ENCODE measurements at regions of chr5 and their contacts with region 1.

Region 1: GRCh38 chr5:73899055-73899454 is 273.1 kb downstream of the ARHGEF28 start:
- DNase-seq: no peak
- H3K4me3 ChIP-seq: no peak overlapping the region
- H3K27ac ChIP-seq: peak overlapping the region; percentile 39 to 79
- H3K4me1 ChIP-seq: peaks cover 0 to 7% of the 10 kb centered on the region in 2 donors
- H3K27me3 ChIP-seq: no peaks in the 10 kb centered on the region
- CTCF ChIP-seq: no peak
- POLR2A ChIP-seq: no peak

Region 2: DNA sequence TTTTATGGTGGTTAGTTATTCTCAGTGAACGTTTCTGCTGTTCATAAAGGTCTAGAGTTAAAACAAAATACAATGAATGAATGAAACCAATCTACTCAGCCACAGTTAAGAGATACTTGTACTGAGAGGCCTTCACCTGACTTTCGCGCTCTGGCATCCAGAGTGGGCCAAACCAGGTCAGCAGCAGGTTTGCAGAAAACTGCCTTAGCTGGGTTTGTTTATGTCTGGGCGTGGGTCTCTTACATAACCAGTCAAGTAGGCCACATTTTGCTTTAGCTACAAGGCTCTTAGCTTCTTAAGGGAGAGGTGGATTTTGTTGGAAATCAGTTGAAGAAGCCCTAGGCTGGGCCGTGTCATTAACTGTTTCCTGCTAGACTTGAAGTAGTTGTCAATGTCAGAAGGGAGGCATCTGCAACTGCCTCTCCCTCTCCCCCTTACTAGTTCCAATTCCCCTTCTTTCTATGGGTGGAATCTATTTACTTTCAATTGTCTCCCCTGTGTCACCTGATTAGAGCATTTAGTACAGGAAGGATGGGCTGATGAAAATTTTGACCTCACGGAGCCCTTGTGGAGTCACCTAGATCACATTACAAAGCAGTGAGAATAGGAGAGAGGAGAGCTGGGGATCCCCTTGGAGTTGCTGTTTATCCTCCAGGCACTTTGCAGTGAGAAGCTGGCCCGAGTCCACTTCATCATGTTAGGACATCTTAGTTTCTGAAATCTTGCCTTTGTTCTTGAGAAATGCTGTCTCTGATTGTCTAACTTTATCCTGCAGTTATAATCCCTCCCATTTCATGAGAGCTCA is 72.6 kb before region 1 on chr5:
- intact Hi-C with region 1: loop called (anchors 2 kb)
- DNase-seq: peak; percentile 73 to 90
- H3K4me3 ChIP-seq: no peak overlapping the region
- H3K27ac ChIP-seq: peak overlapping the region; percentile 78 to 90
- H3K4me1 ChIP-seq: peaks cover 0 to 12% of the 10 kb centered on the region in 2 donors
- H3K27me3 ChIP-seq: no peaks in the 10 kb centered on the region
- CTCF ChIP-seq: no peak
- POLR2A ChIP-seq: no peak

Region 3: DNA sequence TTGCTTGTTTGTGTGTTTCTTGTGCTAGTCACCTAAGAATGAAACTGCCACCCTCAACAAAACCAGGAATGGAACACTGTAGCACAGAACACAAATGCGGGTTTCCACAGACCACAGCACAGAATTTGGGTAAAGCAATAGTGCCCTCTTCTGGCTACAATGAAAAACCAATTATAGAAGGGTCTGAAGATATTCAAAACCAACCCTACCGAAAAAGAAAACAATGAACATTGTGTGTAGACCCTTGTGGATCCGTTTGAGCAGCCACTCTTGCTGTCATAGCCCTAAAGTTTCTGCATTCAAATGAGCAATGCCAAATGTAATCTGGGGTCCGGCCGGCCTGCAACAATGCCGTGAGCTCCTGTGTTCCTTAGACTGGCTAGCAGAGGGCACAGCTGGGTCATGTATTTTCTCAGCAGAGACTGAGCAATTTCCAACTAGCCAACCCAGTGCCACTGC is 749.8 kb after region 1 on chr5:
- intact Hi-C with region 1: loop called (anchors 5 kb)
- DNase-seq: no peak
- H3K4me3 ChIP-seq: no peak overlapping the region
- H3K27ac ChIP-seq: no peak overlapping the region
- H3K4me1 ChIP-seq: no peaks in the 10 kb centered on the region
- H3K27me3 ChIP-seq: no peaks in the 10 kb centered on the region
- CTCF ChIP-seq: peak; percentile 57 to 81 (median 67)
- POLR2A ChIP-seq: no peak